ENCODE measurements at regions of chr1 and their contacts with region 1.

Region 1: GRCh38 chr1:199684686-199685273 is 342.7 kb upstream of the NR5A2 start:
- DNase-seq: peak; percentile 88
- H3K4me3 ChIP-seq: no peak overlapping the region
- H3K27ac ChIP-seq: peak overlapping the region; percentile 69
- H3K4me1 ChIP-seq: peaks cover 46% of the 10 kb centered on the region
- H3K27me3 ChIP-seq: no peaks in the 10 kb centered on the region
- CTCF ChIP-seq: peak; percentile 64 to 74
- POLR2A ChIP-seq: no peak

Region 2: GRCh38 chr1:199780948-199781347 is 96.2 kb after region 1 on chr1:
- CTCF ChIA-PET with region 1: interaction called, 12 read pairs
- POLR2A ChIA-PET with region 1: no interaction called
- dilution Hi-C with region 1: no loop called
- intact Hi-C with region 1: no loop called
- DNase-seq: peak; percentile 56
- H3K4me3 ChIP-seq: no peak overlapping the region
- H3K27ac ChIP-seq: peak overlapping the region; percentile 63
- H3K4me1 ChIP-seq: peaks cover 45% of the 10 kb centered on the region
- H3K27me3 ChIP-seq: no peaks in the 10 kb centered on the region
- CTCF ChIP-seq: no peak
- POLR2A ChIP-seq: no peak

Region 3: DNA sequence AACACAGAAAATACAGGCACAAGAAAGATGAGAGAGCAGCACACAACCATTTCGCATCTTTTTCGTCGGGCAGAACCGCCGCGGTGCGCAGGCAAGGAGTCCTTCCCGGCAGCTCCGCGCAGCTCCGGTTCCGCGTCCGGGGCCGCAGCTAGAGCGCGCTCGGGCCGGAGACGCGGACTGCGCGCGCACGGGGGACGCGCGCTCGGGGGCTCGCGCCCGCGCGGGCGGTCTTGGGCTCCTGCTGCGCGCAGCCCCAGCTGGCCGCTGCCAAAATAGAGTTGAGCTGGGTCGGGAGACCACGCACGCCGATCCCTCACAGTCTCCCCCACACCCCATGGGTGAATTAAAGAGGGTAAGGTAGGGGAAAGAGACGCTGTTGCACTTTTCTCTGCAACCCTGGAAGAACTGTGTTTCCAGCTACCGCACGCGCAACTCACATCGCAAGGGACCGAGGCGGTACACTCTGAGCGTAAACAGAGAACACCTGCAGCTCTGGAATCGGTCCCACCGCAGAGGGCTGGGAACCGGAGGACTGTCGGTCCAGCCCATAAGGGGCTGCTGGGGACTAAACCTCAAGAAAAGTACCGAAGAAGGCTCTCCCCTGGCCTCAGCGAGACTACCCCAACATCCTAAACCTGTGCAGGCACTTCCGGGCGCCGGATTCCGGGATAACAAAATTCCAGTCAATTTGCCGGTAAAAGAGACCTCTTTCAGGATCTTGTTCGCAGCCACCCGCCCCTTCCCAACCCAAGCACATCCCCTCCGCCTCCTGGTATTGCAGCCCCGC is 344.4 kb after region 1 on chr1:
- CTCF ChIA-PET with region 1: interaction called, 30 read pairs
- POLR2A ChIA-PET with region 1: interaction called, 7 read pairs
- dilution Hi-C with region 1: no loop called
- intact Hi-C with region 1: no loop called
- DNase-seq: peak; percentile 69
- H3K4me3 ChIP-seq: peak overlapping the region; percentile 9 to 64 (median 50)
- H3K27ac ChIP-seq: no peak overlapping the region
- H3K4me1 ChIP-seq: peaks cover 7% of the 10 kb centered on the region
- H3K27me3 ChIP-seq: peaks cover 19 to 56% of the 10 kb centered on the region in 2 experiments
- CTCF ChIP-seq: no peak
- POLR2A ChIP-seq: no peak

Region 4: DNA sequence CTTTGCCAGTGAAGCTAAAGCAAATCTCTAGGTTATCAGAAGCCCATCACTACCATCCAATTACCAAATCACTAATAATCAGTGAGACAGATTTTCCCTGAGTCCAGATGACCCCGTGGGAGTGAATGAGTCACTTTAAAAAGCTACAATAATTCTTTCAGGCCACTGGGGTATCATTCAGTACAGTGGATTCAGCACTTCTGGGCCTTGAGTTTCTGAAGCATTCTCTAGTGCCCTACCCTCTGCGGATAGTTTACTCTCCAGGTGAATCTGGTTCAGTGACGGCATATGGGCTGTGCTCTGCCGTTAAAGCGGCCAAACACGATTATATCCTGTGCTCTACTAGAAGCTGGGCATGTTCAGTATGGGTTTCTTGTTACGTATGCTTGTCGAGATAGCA is 368.9 kb after region 1 on chr1:
- CTCF ChIA-PET with region 1: interaction called, 10 read pairs
- POLR2A ChIA-PET with region 1: no interaction called
- dilution Hi-C with region 1: no loop called
- intact Hi-C with region 1: no loop called
- DNase-seq: no peak
- H3K4me3 ChIP-seq: no peak overlapping the region
- H3K27ac ChIP-seq: no peak overlapping the region
- H3K4me1 ChIP-seq: no peaks in the 10 kb centered on the region
- H3K27me3 ChIP-seq: peaks cover 0 to 8% of the 10 kb centered on the region in 2 experiments
- CTCF ChIP-seq: no peak
- POLR2A ChIP-seq: no peak

Region 5: GRCh38 chr1:200139661-200140250 is 455.0 kb after region 1 on chr1:
- CTCF ChIA-PET with region 1: interaction called, 14 read pairs
- POLR2A ChIA-PET with region 1: no interaction called
- dilution Hi-C with region 1: no loop called
- intact Hi-C with region 1: loop called (anchors 1 kb)
- DNase-seq: peak; percentile 67
- H3K4me3 ChIP-seq: no peak overlapping the region
- H3K27ac ChIP-seq: no peak overlapping the region
- H3K4me1 ChIP-seq: no peaks in the 10 kb centered on the region
- H3K27me3 ChIP-seq: no peaks in the 10 kb centered on the region
- CTCF ChIP-seq: peak; percentile 64 to 65
- POLR2A ChIP-seq: no peak

Region 6: DNA sequence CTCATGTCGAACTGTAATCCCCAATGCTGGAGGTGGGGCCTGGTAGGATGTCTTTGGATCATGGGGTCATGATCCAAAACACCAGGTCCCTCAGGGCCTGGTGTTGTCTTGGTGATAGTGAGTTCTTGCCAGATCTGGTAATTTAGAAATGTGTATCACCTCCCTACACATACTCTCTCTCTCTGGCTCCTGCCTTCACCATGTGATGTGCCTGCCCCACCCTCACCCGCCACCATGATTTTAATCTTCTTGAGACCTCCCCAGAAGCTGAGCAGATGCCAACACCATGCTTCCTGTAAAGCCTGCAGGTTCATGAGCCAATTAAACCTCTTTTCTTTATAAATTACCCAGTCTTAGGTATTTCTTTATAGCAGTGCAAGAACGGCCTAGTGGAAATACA is 479.1 kb after region 1 on chr1:
- CTCF ChIA-PET with region 1: no interaction called
- POLR2A ChIA-PET with region 1: no interaction called
- dilution Hi-C with region 1: no loop called
- intact Hi-C with region 1: no loop called
- DNase-seq: no peak
- H3K4me3 ChIP-seq: no peak overlapping the region
- H3K27ac ChIP-seq: no peak overlapping the region
- H3K4me1 ChIP-seq: no peaks in the 10 kb centered on the region
- H3K27me3 ChIP-seq: no peaks in the 10 kb centered on the region
- CTCF ChIP-seq: no peak
- POLR2A ChIP-seq: no peak

Region 7: DNA sequence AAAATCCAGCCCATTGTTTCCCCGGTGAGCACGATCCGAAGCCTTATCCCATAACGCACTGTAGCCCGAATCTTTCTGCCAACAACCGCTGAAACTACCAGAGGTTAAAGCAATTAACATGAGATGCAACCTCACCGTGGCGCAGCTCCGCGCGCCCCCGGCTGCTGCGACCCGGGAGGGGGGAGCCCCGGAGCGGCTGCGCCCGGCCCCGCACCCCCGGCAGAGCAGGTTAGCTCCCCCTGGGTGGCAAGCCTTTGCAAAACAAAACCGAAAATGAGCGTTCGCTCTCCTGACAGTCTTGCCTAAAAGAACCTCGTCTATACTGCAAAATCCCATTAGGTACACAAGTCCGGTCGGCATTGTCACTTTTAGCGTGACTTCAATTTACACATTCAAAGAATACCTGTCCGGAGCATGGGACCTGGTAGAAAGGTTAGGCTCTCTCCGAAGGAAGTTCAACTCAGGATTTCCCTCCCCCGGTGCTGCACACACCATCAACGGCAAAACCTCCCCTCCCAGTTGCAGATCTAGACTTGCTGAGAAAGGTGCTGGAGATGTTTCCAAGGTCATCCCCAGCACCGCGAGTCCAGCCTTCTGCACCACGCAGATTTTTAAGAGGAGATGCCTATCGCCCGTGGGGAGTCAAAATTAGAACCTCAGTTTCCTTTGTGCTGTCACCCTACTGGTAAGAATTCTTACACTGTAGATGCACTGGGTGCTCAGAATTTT is 617.6 kb after region 1 on chr1:
- CTCF ChIA-PET with region 1: interaction called, 10 read pairs
- POLR2A ChIA-PET with region 1: no interaction called
- dilution Hi-C with region 1: no loop called
- intact Hi-C with region 1: loop called (anchors 1 kb)
- DNase-seq: peak; percentile 44
- H3K4me3 ChIP-seq: peak overlapping the region; percentile 63 to 85 (median 81)
- H3K27ac ChIP-seq: no peak overlapping the region
- H3K4me1 ChIP-seq: peaks cover 2% of the 10 kb centered on the region
- H3K27me3 ChIP-seq: peaks cover 5 to 7% of the 10 kb centered on the region in 2 experiments
- CTCF ChIP-seq: no peak
- POLR2A ChIP-seq: no peak